Posterior vena cava (tissue), 2 donors: ENCODE measurements at regions of chr18 and their contacts with region 1.

Region 1: GRCh38 chr18:66990909-66991308 is 387.0 kb upstream of the CDH19 start:
- DNase-seq: no peak

Region 2: DNA sequence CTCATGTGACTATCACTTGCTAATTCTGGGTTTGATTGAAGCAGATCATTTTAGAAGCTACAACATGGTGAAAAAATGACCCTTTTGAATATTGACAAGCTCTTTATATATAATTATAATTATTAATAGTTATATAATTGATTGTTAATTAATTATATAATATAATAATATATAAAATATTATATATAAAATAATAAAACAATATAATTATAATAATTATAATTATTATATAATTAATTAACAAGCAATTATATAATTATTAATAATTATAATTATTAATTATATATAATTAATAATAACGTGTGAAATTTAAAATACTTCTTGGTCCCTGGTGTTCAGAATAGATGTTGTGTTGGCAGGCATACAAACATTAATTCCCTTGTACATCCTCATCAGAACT is 17.1 kb after region 1 on chr18:
- intact Hi-C with region 1: loop called in 1 of 2 experiments (anchors 1 kb)
- DNase-seq: no peak

Region 3: DNA sequence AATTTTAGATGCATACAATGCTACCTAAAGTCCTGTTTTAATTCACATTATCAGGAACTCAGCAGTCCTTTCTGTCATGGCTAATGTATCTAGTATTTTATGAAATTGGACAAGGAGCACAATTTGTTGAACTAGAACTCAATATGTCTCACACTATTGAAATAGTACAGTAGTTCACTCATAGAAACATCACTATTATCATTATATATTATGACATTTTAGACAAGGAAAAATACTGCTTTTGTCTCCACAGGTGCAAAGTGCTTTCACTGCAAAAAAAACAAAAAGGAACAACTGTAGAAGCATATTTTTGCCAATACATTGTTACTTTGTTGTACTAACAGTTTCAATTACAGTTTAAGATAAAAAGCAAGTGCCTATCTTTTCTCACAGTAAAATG is 32.1 kb after region 1 on chr18:
- intact Hi-C with region 1: no loop called
- DNase-seq: no peak

Region 4: DNA sequence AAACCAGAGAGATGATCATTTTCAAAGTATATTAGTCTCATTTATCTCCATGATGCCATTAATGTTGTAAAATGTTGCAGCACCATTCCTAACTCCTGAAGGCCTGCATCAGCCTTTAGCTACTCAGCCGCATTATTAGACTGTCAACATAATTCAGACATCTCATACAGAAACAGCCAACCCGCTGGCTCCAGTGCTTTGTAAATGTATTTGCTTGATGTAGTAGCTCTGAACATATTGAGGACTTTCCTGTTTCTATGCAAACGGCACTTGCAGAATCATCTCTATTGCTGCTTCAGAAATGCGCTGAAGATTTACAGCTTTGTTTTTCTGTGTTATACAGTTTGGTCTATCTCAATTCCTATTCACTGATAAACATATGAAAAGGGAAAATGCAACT is 153.4 kb after region 1 on chr18:
- intact Hi-C with region 1: no loop called
- DNase-seq: no peak